Activated B cell treated with CpG ODN at 0.5 μM for 24 hours (primary cell): ENCODE measurements at regions of chr3 and their contacts with region 1.

Region 1: GRCh38 chr3:177337541-177338331 is 140.5 kb upstream of the TBL1XR1 start:
- DNase-seq: no peak
- ATAC-seq: peak; percentile 82
- H3K4me3 Mint-ChIP-seq: peak overlapping the region; percentile 67
- H3K27ac Mint-ChIP-seq: peak overlapping the region; percentile 98
- H3K4me1 Mint-ChIP-seq: peaks cover 61% of the 10 kb centered on the region
- H3K27me3 Mint-ChIP-seq: no peaks in the 10 kb centered on the region
- CTCF ChIP-seq: no peak

Region 2: GRCh38 chr3:177251755-177252154 is 86.0 kb before region 1 on chr3:
- CTCF ChIA-PET with region 1: no interaction called
- POLR2A ChIA-PET with region 1: interaction called, 11 read pairs
- intact Hi-C with region 1: loop called (anchors 1 kb)
- DNase-seq: no peak
- ATAC-seq: peak; percentile 64
- H3K4me3 Mint-ChIP-seq: no peak overlapping the region
- H3K27ac Mint-ChIP-seq: peak overlapping the region; percentile 79
- H3K4me1 Mint-ChIP-seq: peaks cover 36% of the 10 kb centered on the region
- H3K27me3 Mint-ChIP-seq: no peaks in the 10 kb centered on the region
- CTCF ChIP-seq: no peak